Psoas muscle (tissue), 8 donors: ENCODE measurements at regions of chr13 and their contacts with region 1.

Region 1: DNA sequence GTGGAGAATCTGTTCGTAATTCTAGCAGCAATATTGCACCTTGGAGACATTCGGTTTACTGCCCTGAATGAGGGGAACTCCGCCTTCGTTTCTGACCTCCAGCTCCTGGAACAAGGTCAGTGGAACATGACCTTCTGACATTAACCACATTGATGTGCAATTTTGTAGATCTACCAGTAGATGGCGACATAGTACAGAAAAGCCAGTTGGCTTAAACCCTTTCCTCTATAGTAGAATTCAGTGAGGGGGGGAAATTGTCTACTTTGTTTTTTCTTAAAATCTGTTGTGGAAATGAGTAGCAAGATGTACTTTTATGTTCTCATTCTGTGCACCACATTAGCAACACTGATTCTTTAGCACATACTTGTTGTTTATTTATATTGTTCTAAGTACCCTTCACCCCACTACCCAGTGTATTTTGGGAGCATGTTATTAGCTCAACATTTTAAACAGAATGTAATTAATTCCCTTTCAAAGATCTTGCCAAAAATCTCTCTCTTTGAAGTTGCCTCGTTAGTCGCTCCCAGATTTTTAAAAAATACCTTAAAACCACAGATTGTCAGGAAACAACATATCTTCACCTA is 332.2 kb downstream of the MYO16 start:
- DNase-seq: no peak
- ATAC-seq: peak; percentile 57 to 88 (median 76)
- H3K4me3 ChIP-seq: no peak overlapping the region
- H3K27ac ChIP-seq: no peak overlapping the region
- H3K4me1 ChIP-seq: no peaks in the 10 kb centered on the region
- H3K27me3 ChIP-seq: no peaks in the 10 kb centered on the region
- CTCF ChIP-seq: peak; percentile 88

Region 2: DNA sequence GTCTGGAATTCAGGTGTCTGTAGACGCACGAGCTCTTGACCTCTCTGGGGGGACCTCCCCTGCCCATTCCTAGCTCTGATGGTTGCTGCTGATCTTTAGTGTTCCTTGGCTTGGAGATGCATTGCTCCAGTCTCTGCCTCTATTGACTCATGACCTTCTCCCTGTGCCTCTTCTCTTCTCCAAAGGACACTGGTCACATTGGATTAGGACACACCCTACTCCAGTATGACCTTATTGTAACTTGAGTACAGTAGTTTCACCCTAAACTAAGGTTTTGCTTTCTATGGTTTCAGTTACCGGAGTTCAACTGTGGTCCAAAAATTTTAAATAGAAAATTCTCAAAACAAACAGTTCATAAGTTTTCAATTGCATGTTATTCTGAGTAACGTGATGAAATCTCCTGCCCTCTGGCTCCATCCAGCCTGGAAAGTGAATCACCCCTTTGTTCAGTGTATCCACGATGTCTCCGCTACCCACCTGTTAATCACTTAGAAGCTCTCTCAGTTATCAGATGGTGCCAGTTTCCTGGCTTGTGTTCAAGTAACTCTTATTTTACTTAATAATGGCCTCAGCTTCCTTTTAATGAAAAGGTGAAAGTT is 59.0 kb before region 1 on chr13:
- intact Hi-C with region 1: no loop called
- DNase-seq: no peak
- ATAC-seq: no peak
- H3K4me3 ChIP-seq: no peak overlapping the region
- H3K27ac ChIP-seq: no peak overlapping the region
- H3K4me1 ChIP-seq: no peaks in the 10 kb centered on the region
- H3K27me3 ChIP-seq: no peaks in the 10 kb centered on the region
- CTCF ChIP-seq: no peak

Region 3: GRCh38 chr13:110116072-110116487 is 1154.4 kb after region 1 on chr13:
- intact Hi-C with region 1: loop called in 1 of 2 experiments (anchors 5 kb)
- DNase-seq: peak; percentile 70 to 80
- ATAC-seq: peak; percentile 54 to 76 (median 62)
- H3K4me3 ChIP-seq: no peak overlapping the region
- H3K27ac ChIP-seq: no peak overlapping the region
- H3K4me1 ChIP-seq: no peaks in the 10 kb centered on the region
- H3K27me3 ChIP-seq: no peaks in the 10 kb centered on the region
- CTCF ChIP-seq: peak; percentile 78